ENCODE measurements at regions of chr22 and their contacts with region 1.

Region 1: DNA sequence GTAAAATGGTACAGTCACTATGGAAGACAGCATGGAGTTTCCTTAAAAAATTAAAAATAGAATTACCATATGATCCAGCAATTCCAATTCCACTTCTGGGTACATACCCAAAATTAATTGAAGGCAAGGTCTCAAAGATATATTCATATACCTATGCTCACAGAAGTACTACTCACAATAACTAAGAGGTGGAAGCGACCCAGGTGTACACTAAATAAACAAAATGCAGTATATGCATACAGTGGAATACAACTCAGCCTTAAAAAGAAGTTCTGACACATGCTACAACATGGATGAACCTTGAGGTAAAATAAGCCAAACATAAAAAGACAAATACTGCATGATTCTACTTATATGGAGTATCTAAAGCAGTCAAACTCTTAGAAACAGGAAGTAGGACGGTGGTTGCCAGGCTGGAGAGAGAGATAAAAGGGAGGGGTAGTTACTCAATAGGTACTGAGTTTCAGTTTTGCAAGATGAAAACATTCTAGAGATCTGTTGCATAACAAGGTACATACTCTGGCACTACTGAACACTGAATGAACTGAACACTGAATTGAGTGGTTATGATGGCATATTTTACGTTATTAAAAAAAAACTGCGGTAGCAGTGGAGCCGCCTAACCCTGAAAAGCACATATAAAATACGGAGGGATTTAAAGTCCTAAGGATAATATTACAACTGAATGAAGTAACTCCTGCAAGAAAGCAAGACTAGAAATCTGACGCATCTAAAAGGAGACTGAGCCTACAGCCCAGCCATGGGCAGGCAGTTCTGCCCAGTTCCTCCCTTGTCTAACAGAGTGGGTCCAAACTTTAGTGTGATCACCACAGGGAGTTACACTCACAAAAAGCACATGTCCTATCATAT is 12.8 kb downstream of the DGCR2 start:
- DNase-seq: peak; percentile 88 to 97 (median 95)
- H3K4me3 ChIP-seq: peak overlapping the region in 6 of 7 experiments; percentile 6 to 70 (median 51)
- H3K27ac ChIP-seq: peak overlapping the region; percentile 59 to 84
- H3K4me1 ChIP-seq: peaks cover 25 to 50% (median 35%) of the 10 kb centered on the region in 4 experiments
- H3K27me3 ChIP-seq: no peaks in the 10 kb centered on the region

Region 2: GRCh38 chr22:18998998-18999397 is 110.4 kb before region 1 on chr22:
- CTCF ChIA-PET with region 1: no interaction called
- POLR2A ChIA-PET with region 1: no interaction called
- DNase-seq: peak; percentile 2 to 11 (median 11)
- H3K4me3 ChIP-seq: no peak overlapping the region
- H3K27ac ChIP-seq: no peak overlapping the region
- H3K4me1 ChIP-seq: no peaks in the 10 kb centered on the region
- H3K27me3 ChIP-seq: peaks cover 10 to 31% (median 22%) of the 10 kb centered on the region in 5 experiments

Region 3: DNA sequence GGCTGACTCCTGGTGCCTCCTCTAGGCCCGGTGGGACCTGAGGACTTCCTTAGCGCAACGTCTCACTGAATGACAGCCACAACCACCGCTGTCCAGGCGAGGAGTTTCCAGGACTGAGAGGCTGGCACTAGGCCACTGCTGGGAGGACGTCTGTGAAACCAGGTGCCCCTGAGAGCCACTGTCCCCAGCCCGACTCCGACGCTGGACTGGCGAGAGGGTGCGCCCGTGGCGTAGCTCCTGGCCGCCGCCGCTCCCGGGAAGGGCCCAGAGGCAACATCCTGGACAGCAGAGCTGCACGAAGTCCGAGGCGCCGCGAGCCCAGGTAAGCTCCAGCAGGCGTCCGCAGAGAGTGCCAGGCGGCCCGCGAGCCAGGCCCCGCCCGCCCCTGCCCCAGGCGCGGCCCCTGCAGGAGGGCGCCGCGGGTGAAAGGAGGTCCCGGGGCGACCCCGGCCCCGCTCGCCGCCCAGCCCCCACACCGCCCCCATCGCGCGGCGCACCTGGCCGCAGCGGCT is 12.3 kb after region 1 on chr22:
- CTCF ChIA-PET with region 1: interaction called, 15 read pairs
- POLR2A ChIA-PET with region 1: interaction called, 5 read pairs
- DNase-seq: peak in 1 of 3 donors; percentile 56
- H3K4me3 ChIP-seq: peak overlapping the region; percentile 60 to 98 (median 85)
- H3K27ac ChIP-seq: peak overlapping the region; percentile 25 to 83
- H3K4me1 ChIP-seq: peaks cover 4 to 52% (median 31%) of the 10 kb centered on the region in 4 experiments
- H3K27me3 ChIP-seq: peaks cover 0 to 2% (median 0%) of the 10 kb centered on the region in 5 experiments